Dendritic cell treated with granulocyte-macrophage colony-stimulating factor and Interleukin-4, amounts not matched to agents 40 ng/mL and 50 ng/mL, for 4 days (primary cell): ENCODE measurements at regions of chr6 and their contacts with region 1.

Region 1: DNA sequence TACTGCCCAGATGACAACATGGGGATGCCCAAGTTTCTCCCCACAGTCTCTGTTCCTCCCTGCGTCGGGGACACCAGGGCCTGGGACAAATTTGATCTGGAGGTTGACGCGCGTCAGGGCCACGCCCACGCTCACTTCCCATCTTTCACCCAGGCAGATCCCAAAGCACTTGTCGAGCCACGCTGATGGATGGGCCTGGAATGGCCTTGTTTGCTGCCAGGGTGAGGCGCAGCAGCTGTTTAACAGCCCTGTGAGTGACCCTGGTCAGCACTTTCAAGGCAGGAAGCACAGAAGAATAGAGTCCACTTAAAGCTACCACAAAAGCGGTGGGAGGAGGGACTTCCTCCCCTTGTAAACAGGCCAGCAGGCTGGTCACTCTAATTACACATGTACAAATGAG is 324.7 kb upstream of the JARID2 start:
- H3K4me3 Mint-ChIP-seq: peak overlapping the region; percentile 32
- H3K27ac Mint-ChIP-seq: peak overlapping the region; percentile 91
- H3K4me1 Mint-ChIP-seq: peaks cover 92% of the 10 kb centered on the region
- H3K27me3 Mint-ChIP-seq: no peaks in the 10 kb centered on the region

Region 2: GRCh38 chr6:14876778-14877613 is 44.2 kb before region 1 on chr6:
- intact Hi-C with region 1: loop called (anchors 2 kb)
- H3K4me3 Mint-ChIP-seq: peak overlapping the region; percentile 57
- H3K27ac Mint-ChIP-seq: peak overlapping the region; percentile 97
- H3K4me1 Mint-ChIP-seq: peaks cover 85% of the 10 kb centered on the region
- H3K27me3 Mint-ChIP-seq: no peaks in the 10 kb centered on the region

Region 3: GRCh38 chr6:14910692-14911547 is 10.2 kb before region 1 on chr6:
- intact Hi-C with region 1: loop called (anchors 1 kb)
- H3K4me3 Mint-ChIP-seq: no peak overlapping the region
- H3K27ac Mint-ChIP-seq: peak overlapping the region; percentile 85
- H3K4me1 Mint-ChIP-seq: peaks cover 38% of the 10 kb centered on the region
- H3K27me3 Mint-ChIP-seq: peaks cover 3% of the 10 kb centered on the region

Region 4: GRCh38 chr6:14953836-14954235 is 32.7 kb after region 1 on chr6:
- intact Hi-C with region 1: no loop called
- H3K4me3 Mint-ChIP-seq: no peak overlapping the region
- H3K27ac Mint-ChIP-seq: peak overlapping the region; percentile 26
- H3K4me1 Mint-ChIP-seq: peaks cover 43% of the 10 kb centered on the region
- H3K27me3 Mint-ChIP-seq: no peaks in the 10 kb centered on the region

Region 5: DNA sequence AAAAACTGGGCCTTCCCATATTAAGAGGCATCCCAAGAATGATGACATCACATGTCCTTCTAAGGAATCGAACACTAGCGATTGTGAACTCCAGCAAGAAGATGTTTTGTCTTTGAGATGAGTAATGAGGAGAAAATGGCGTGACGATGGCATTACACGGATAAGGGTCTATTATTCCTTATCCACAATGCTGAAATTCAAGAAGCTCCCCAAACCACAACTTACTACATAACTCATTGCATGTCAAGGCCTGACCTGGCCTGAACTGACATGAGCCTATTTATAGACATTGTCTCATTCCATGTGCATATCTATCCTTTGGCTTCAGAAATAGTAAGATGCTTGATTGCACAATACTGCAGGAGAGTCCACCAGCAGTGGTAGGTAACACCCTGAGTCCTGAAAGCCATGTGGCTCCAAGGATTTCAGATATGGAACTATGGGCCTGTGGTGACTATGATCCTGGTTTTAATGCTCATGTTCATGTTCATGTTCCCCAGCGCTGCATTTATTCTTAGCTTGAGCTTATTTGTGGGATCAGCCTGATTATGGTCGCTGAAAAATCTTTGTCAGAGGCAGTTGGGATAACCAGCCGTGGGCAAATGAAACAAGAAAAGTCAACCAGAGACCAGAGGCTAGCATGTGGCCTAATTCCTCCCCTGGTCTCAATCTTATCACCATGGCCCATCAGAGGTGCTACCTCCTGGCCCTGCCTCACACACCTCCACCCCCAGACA is 141.5 kb after region 1 on chr6:
- intact Hi-C with region 1: loop called (anchors 5 kb)
- H3K4me3 Mint-ChIP-seq: no peak overlapping the region
- H3K27ac Mint-ChIP-seq: peak overlapping the region; percentile 58
- H3K4me1 Mint-ChIP-seq: peaks cover 62% of the 10 kb centered on the region
- H3K27me3 Mint-ChIP-seq: no peaks in the 10 kb centered on the region

Region 6: DNA sequence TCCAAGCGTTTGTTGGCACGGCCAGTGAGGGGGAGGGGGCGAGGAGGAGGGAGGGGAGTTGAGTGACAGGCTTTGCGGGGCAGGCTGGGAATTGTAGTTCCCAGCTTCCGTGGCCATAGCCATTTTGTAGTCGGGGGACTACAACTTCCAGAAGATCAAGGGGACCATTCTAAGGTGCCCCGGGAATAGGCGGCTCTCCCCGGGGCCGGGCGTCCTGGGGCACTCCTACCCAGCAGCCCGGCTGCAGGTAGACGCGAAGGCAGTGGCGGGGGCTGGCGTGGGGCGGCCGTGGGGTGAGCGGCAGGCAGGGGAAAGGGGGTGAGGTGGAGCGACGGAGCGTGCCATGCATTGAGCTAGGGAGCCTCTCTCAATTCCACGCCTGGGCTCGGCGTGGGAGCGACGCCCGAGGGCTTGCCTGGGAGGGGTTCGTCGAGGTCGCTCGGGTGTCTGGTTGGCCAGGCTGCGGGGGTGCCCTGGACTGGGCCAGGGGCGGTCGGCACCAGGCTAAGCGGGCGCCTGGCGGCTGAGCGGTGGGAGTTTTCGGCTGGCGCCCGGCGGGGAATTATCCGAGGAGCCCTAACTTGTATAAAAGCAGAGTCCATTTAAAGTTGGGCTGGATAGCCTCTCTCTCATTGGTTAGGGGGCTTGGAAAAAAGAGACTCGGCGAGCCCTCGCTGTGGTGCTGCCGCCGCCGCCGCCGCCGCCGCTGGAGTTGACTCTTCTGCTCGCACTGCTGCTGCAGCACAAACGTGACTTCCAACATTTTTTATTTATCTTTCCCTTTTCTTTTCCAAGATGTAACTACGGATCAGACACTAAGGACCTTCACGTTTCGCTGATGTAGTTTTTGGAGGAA is 324.4 kb after region 1 on chr6 and contains the start of gene JARID2:
- intact Hi-C with region 1: loop called (anchors 5 kb)
- H3K4me3 Mint-ChIP-seq: peak within 1 kb of the TSS; percentile 85
- H3K27ac Mint-ChIP-seq: peak within 1 kb of the TSS; percentile 92
- H3K4me1 Mint-ChIP-seq: peaks cover 26% of the 10 kb centered on the region
- H3K27me3 Mint-ChIP-seq: no peaks in the 10 kb centered on the region